Activated CD4-positive, alpha-beta T cell treated with anti-CD3 and anti-CD28 coated beads, Interleukin-2, amount 10 ng/mL, durations not matched to agents 24 days and 14 days (primary cell): ENCODE measurements at regions of chr10 and their contacts with region 1.

Region 1: DNA sequence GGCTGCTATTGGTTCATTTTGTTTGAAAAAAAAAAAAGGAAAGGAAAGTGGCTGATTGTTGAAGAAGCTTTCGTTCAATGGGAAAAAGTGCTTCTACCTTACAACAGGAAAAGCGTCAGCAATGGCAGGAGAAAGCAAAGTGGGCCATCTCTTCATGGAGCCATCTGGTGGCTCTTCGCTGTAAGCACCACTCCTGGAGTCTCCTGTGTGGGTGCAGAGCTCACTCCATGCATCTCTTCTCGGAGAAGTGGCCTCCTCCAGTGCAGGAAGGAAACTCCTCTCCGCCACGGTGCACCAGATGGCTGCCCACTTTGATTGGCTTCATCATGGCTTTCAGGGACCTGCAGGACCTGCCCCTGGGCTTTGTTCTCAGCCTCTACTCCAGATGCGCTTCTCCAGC is 250.9 kb downstream of the PTEN start:
- DNase-seq: peak; percentile 65
- H3K4me3 Mint-ChIP-seq: no peak overlapping the region
- H3K27ac Mint-ChIP-seq: no peak overlapping the region
- H3K4me1 Mint-ChIP-seq: peaks cover 28% of the 10 kb centered on the region
- H3K27me3 Mint-ChIP-seq: peaks cover 3% of the 10 kb centered on the region

Region 2: DNA sequence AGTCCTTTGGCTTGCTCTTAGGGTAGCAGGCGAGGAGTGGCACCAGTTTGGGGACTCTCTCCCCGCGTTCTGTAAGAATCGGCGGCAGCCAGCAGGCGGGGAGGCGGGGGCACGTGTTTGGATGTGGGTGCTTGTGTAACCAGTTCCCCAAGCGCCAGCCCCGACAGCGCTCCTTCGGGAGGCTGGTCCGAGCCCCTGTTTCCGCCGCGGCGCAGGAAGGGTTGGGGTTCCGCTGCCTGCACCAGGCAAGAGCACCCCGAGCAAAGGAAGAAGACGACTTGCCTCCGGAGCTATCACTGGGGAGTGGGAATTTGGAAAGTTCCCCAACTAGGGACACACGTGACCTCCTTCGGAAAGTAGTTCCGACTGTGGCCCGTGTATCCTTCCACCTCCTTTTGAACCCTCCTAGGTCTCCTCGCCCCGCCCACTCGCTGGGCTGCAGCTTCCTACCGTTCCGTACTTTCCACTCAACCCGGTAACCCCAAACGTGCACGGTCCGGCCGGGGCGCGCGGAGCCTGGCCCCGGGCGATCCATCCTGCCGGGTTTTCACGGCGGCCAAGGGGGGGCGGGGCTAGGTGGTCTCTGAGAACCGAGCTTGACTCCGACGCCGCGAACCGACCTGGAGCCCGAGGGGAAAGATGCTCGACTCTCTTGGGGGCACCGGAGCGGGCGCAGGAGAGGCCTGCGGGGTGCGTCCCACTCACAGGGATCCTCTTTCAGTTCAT is 252.3 kb before region 1 on chr10:
- intact Hi-C with region 1: loop called (anchors 1 kb)
- DNase-seq: peak; percentile 98
- H3K4me3 Mint-ChIP-seq: peak overlapping the region; percentile 92
- H3K27ac Mint-ChIP-seq: peak overlapping the region; percentile 91
- H3K4me1 Mint-ChIP-seq: peaks cover 38% of the 10 kb centered on the region
- H3K27me3 Mint-ChIP-seq: no peaks in the 10 kb centered on the region

Region 3: GRCh38 chr10:88064608-88065382 is 49.6 kb before region 1 on chr10:
- intact Hi-C with region 1: loop called (anchors 2 kb)
- DNase-seq: peak; percentile 72
- H3K4me3 Mint-ChIP-seq: no peak overlapping the region
- H3K27ac Mint-ChIP-seq: peak overlapping the region; percentile 29
- H3K4me1 Mint-ChIP-seq: peaks cover 40% of the 10 kb centered on the region
- H3K27me3 Mint-ChIP-seq: peaks cover 8% of the 10 kb centered on the region

Region 4: GRCh38 chr10:88138319-88138848 is 24.0 kb after region 1 on chr10:
- intact Hi-C with region 1: loop called (anchors 1 kb)
- DNase-seq: peak; percentile 69
- H3K4me3 Mint-ChIP-seq: peak overlapping the region; percentile 36
- H3K27ac Mint-ChIP-seq: peak overlapping the region; percentile 38
- H3K4me1 Mint-ChIP-seq: peaks cover 13% of the 10 kb centered on the region
- H3K27me3 Mint-ChIP-seq: peaks cover 12% of the 10 kb centered on the region

Region 5: GRCh38 chr10:88194041-88194887 is 79.9 kb after region 1 on chr10:
- intact Hi-C with region 1: loop called (anchors 5 kb)
- DNase-seq: peak; percentile 85
- H3K4me3 Mint-ChIP-seq: peak overlapping the region; percentile 39
- H3K27ac Mint-ChIP-seq: peak overlapping the region; percentile 79
- H3K4me1 Mint-ChIP-seq: peaks cover 25% of the 10 kb centered on the region
- H3K27me3 Mint-ChIP-seq: peaks cover 2% of the 10 kb centered on the region

Region 6: DNA sequence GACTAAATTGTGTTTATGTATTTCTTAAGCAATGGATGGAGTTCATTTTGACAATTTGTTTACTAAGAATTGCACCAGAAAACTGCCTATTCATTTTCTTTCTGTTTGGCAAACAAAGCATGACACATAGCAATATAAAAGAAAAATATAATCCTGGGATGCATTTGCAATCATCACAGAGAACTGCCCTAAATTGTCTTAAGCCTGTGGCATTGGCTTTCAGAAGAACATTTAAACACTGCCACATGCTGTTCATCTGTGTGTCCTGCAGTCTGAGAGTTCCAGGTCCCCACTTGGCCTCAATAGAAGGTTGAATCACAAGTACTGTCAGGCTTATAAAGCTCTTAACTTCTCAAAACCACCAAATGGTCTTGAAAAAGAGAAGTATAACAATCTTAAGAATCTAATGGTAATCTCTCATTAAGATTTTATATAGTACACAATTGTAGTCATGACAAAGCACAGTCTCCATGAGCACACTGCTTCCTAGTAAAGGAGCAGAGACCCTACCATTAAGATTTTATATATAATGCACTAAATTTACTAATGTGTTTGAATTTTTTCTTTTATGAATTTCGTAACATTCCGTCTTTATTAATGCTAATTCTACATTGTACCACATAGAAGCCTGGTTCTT is 438.9 kb after region 1 on chr10:
- intact Hi-C with region 1: loop called (anchors 10 kb)
- DNase-seq: peak; percentile 83
- H3K4me3 Mint-ChIP-seq: no peak overlapping the region
- H3K27ac Mint-ChIP-seq: no peak overlapping the region
- H3K4me1 Mint-ChIP-seq: peaks cover 3% of the 10 kb centered on the region
- H3K27me3 Mint-ChIP-seq: peaks cover 9% of the 10 kb centered on the region